GM12878 (cell line): ENCODE measurements at regions of chr7 and their contacts with region 1.

Region 1: DNA sequence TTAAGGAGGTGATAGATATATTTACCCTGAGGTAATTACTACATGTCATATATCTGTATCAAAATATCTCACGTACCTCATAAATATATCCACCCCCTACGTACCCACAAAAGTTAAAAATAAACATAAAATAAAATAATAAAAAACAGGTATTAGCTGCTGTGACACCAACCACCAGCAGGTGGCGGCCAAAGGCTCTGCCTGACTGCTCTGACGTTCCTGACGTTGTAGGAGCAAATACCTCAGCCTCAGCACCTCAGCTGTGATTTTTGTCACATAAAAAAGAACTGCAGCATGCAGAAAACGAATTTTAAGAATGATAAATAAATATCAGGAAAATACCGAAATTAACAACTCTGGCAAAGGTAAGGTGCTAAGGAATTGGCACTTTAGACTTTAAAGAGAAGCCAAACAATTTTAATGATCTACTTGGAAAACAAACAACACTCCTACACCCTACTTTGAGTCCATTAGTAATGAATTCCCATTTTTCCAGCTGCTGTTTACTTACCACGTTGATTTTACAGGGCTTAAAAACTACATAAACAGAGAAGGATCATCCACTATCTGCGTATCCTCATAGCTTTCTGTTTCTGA is 125.4 kb upstream of the TARP start:
- DNase-seq: no peak
- ATAC-seq: peak; percentile 80
- H3K4me3 ChIP-seq: no peak overlapping the region
- H3K27ac ChIP-seq: no peak overlapping the region
- H3K4me1 ChIP-seq: peaks cover 10% of the 10 kb centered on the region
- H3K27me3 ChIP-seq: no peaks in the 10 kb centered on the region
- CTCF ChIP-seq: peak; percentile 84 to 90 (median 86)
- EP300 ChIP-seq: no peak
- POLR2A ChIP-seq: no peak
- RAD21 ChIP-seq: peak; percentile 86

Region 2: GRCh38 chr7:38411404-38411803 is 12.6 kb after region 1 on chr7:
- CTCF ChIA-PET with region 1: interaction called, 19 read pairs
- POLR2A ChIA-PET with region 1: no interaction called
- RAD21 ChIA-PET with region 1: interaction called, 4 read pairs
- SMC1A ChIA-PET with region 1: interaction called, 10 read pairs
- in situ Hi-C with region 1: no loop called
- intact Hi-C with region 1: no loop called
- DNase-seq: no peak
- ATAC-seq: peak; percentile 70
- H3K4me3 ChIP-seq: no peak overlapping the region
- H3K27ac ChIP-seq: no peak overlapping the region
- H3K4me1 ChIP-seq: no peaks in the 10 kb centered on the region
- H3K27me3 ChIP-seq: no peaks in the 10 kb centered on the region
- CTCF ChIP-seq: peak; percentile 15 to 24 (median 17); a peak in 1 of 6 replicates
- EP300 ChIP-seq: no peak
- POLR2A ChIP-seq: no peak
- RAD21 ChIP-seq: no peak

Region 3: DNA sequence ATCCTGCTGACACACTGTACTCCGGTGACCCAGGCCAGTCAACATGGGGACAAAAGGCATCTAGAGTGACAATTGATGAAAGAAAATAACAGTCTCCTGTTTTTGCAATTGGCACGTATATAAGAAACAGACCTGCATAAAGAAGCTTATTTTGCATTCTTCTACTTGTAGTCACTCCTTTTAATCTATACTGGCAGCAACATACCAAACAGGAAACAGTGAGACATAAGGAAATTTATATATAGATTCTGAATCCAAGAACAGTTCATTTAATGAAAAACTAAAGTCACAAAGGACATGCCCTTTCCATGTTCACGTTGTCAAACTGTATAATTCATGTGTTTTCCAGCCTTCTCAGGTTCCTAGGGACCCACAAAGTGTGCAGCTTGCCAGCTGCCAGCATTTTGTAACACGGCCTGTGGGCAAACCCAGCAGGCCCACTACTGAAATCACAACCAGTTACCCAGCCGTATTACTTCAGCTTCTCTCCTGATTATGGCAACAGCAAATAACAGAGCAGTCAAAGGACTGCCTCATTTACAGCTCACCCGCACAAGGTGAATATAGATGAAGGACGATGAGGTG is 160.0 kb after region 1 on chr7:
- CTCF ChIA-PET with region 1: no interaction called
- POLR2A ChIA-PET with region 1: no interaction called
- RAD21 ChIA-PET with region 1: no interaction called
- SMC1A ChIA-PET with region 1: no interaction called
- in situ Hi-C with region 1: no loop called
- intact Hi-C with region 1: loop called (anchors 10 kb)
- DNase-seq: no peak
- ATAC-seq: no peak
- H3K4me3 ChIP-seq: no peak overlapping the region
- H3K27ac ChIP-seq: no peak overlapping the region
- H3K4me1 ChIP-seq: no peaks in the 10 kb centered on the region
- H3K27me3 ChIP-seq: no peaks in the 10 kb centered on the region
- CTCF ChIP-seq: no peak
- EP300 ChIP-seq: no peak
- POLR2A ChIP-seq: no peak
- RAD21 ChIP-seq: no peak

Region 4: GRCh38 chr7:38660427-38661099 is 261.7 kb after region 1 on chr7:
- CTCF ChIA-PET with region 1: interaction called, 59 read pairs
- POLR2A ChIA-PET with region 1: no interaction called
- RAD21 ChIA-PET with region 1: interaction called, 10 read pairs
- SMC1A ChIA-PET with region 1: interaction called, 29 read pairs
- in situ Hi-C with region 1: loop called (anchors 5 kb)
- intact Hi-C with region 1: loop called (anchors 1 kb)
- DNase-seq: no peak
- ATAC-seq: peak; percentile 89
- H3K4me3 ChIP-seq: no peak overlapping the region
- H3K27ac ChIP-seq: no peak overlapping the region
- H3K4me1 ChIP-seq: no peaks in the 10 kb centered on the region
- H3K27me3 ChIP-seq: no peaks in the 10 kb centered on the region
- CTCF ChIP-seq: peak; percentile 71 to 73 (median 72)
- EP300 ChIP-seq: no peak
- POLR2A ChIP-seq: no peak
- RAD21 ChIP-seq: peak; percentile 90

Region 5: GRCh38 chr7:38728145-38728544 is 329.3 kb after region 1 on chr7:
- CTCF ChIA-PET with region 1: no interaction called
- POLR2A ChIA-PET with region 1: no interaction called
- RAD21 ChIA-PET with region 1: no interaction called
- SMC1A ChIA-PET with region 1: no interaction called
- in situ Hi-C with region 1: no loop called
- intact Hi-C with region 1: loop called (anchors 10 kb)
- DNase-seq: no peak
- ATAC-seq: no peak
- H3K4me3 ChIP-seq: no peak overlapping the region
- H3K27ac ChIP-seq: no peak overlapping the region
- H3K4me1 ChIP-seq: no peaks in the 10 kb centered on the region
- H3K27me3 ChIP-seq: no peaks in the 10 kb centered on the region
- CTCF ChIP-seq: no peak
- EP300 ChIP-seq: no peak
- POLR2A ChIP-seq: no peak
- RAD21 ChIP-seq: no peak

Region 6: GRCh38 chr7:39525926-39526325 is 1127.1 kb after region 1 on chr7:
- CTCF ChIA-PET with region 1: interaction called, 3 read pairs
- POLR2A ChIA-PET with region 1: no interaction called
- RAD21 ChIA-PET with region 1: interaction called, 4 read pairs
- SMC1A ChIA-PET with region 1: no interaction called
- in situ Hi-C with region 1: no loop called
- intact Hi-C with region 1: loop called (anchors 2 kb)
- DNase-seq: no peak
- ATAC-seq: no peak
- H3K4me3 ChIP-seq: no peak overlapping the region
- H3K27ac ChIP-seq: no peak overlapping the region
- H3K4me1 ChIP-seq: no peaks in the 10 kb centered on the region
- H3K27me3 ChIP-seq: no peaks in the 10 kb centered on the region; a peak in 2 of 4 replicates
- CTCF ChIP-seq: no peak
- EP300 ChIP-seq: no peak
- POLR2A ChIP-seq: no peak
- RAD21 ChIP-seq: no peak